Caco-2 (cell line): ENCODE measurements at regions of chr5 and their contacts with region 1.

Region 1: GRCh38 chr5:159156426-159157238 is 52.7 kb downstream of the RNF145 start:
- DNase-seq: peak in 1 of 2 experiments; percentile 62
- H3K4me3 ChIP-seq: no peak overlapping the region
- H3K4me3 Mint-ChIP-seq: no peak overlapping the region
- H3K27ac Mint-ChIP-seq: no peak overlapping the region
- H3K4me1 ChIP-seq: no peaks in the 10 kb centered on the region
- H3K4me1 Mint-ChIP-seq: no peaks in the 10 kb centered on the region
- H3K27me3 ChIP-seq: no peaks in the 10 kb centered on the region
- H3K27me3 Mint-ChIP-seq: no peaks in the 10 kb centered on the region
- CTCF ChIP-seq: peak; percentile 79 to 85

Region 2: GRCh38 chr5:159209438-159210305 is 53.0 kb after region 1 on chr5 and contains the start of gene RNF145:
- CTCF ChIA-PET with region 1: interaction called, 12 read pairs
- POLR2A ChIA-PET with region 1: no interaction called
- intact Hi-C with region 1: loop called (anchors 1 kb)
- DNase-seq: peak; percentile 79 to 80
- H3K4me3 ChIP-seq: peak within 1 kb of the TSS; percentile 76
- H3K4me3 Mint-ChIP-seq: peak within 1 kb of the TSS; percentile 99
- H3K27ac Mint-ChIP-seq: peak within 1 kb of the TSS; percentile 97
- H3K4me1 ChIP-seq: peaks cover 23% of the 10 kb centered on the region
- H3K4me1 Mint-ChIP-seq: peaks cover 25% of the 10 kb centered on the region
- H3K27me3 ChIP-seq: no peaks in the 10 kb centered on the region
- H3K27me3 Mint-ChIP-seq: no peaks in the 10 kb centered on the region
- CTCF ChIP-seq: no peak
- total RNA-seq, gene RNF145: 28.3 and 38.7 TPM in 2 replicates

Region 3: GRCh38 chr5:159262859-159263567 is 106.4 kb after region 1 on chr5 and contains the start of gene UBLCP1:
- CTCF ChIA-PET with region 1: no interaction called
- POLR2A ChIA-PET with region 1: interaction called, 5 read pairs
- intact Hi-C with region 1: loop called (anchors 2 kb)
- DNase-seq: peak; percentile 79 to 82
- H3K4me3 ChIP-seq: peak within 1 kb of the TSS; percentile 85
- H3K4me3 Mint-ChIP-seq: peak within 1 kb of the TSS; percentile 89
- H3K27ac Mint-ChIP-seq: peak within 1 kb of the TSS; percentile 95
- H3K4me1 ChIP-seq: peaks cover 12% of the 10 kb centered on the region; the same call in 1 of the 2 replicates
- H3K4me1 Mint-ChIP-seq: peaks cover 13% of the 10 kb centered on the region
- H3K27me3 ChIP-seq: peaks cover 1% of the 10 kb centered on the region
- H3K27me3 Mint-ChIP-seq: peaks cover 11% of the 10 kb centered on the region
- CTCF ChIP-seq: no peak
- total RNA-seq, gene UBLCP1: 23.0 and 23.2 TPM in 2 replicates

Region 4: GRCh38 chr5:159316519-159317383 is 160.1 kb after region 1 on chr5:
- CTCF ChIA-PET with region 1: interaction called, 52 read pairs
- POLR2A ChIA-PET with region 1: interaction called, 3 read pairs
- intact Hi-C with region 1: loop called (anchors 1 kb)
- DNase-seq: peak; percentile 48 to 52
- H3K4me3 ChIP-seq: no peak overlapping the region
- H3K4me3 Mint-ChIP-seq: no peak overlapping the region
- H3K27ac Mint-ChIP-seq: no peak overlapping the region
- H3K4me1 ChIP-seq: no peaks in the 10 kb centered on the region
- H3K4me1 Mint-ChIP-seq: no peaks in the 10 kb centered on the region
- H3K27me3 ChIP-seq: no peaks in the 10 kb centered on the region
- H3K27me3 Mint-ChIP-seq: peaks cover 6% of the 10 kb centered on the region
- CTCF ChIP-seq: peak; percentile 70 to 80

Region 5: DNA sequence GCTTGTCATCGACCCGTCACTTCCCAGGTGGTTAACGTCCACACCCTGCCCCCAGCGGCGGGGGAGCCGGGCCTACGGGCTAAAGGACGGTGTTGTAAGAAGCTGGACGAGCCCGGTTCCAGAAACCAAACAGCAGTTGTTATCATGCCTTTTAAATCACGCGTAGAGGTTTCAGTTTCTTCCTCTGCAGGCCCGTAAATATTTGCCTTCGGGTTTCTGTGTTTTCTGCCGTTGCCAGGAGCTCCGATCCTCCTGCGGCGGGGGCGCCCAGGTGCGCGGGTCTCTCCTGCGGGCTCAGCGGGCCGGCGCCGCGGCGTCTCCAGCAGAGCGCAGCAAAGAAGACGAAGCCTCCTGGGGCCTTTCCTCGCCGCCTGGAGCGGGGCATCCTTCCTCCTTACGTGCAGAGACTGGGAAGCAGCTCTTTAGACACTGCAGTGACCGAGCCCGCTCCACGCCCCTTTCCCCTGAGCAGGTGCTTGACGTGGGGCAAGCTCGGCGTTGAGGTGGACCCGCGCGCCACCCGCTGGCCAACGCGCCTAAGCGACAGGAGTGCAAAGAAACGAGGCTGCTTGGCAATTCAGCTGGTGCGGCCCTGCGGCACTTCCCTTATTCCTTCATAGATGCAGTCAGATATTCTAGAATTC is 830.5 kb after region 1 on chr5:
- CTCF ChIA-PET with region 1: interaction called, 3 read pairs
- POLR2A ChIA-PET with region 1: no interaction called
- intact Hi-C with region 1: loop called (anchors 5 kb)
- DNase-seq: peak; percentile 88 to 90
- H3K4me3 ChIP-seq: peak overlapping the region; percentile 34
- H3K4me3 Mint-ChIP-seq: peak overlapping the region; percentile 64
- H3K27ac Mint-ChIP-seq: no peak overlapping the region
- H3K4me1 ChIP-seq: peaks cover 4% of the 10 kb centered on the region; the same call in 1 of the 2 replicates
- H3K4me1 Mint-ChIP-seq: no peaks in the 10 kb centered on the region
- H3K27me3 ChIP-seq: no peaks in the 10 kb centered on the region; the same call in none of the 2 replicates
- H3K27me3 Mint-ChIP-seq: peaks cover 28% of the 10 kb centered on the region
- CTCF ChIP-seq: peak; percentile 83 to 89